Activated CD4-positive, alpha-beta T cell treated with anti-CD3 and anti-CD28 coated beads for 36 hours (primary cell): ENCODE measurements at regions of chr2 and their contacts with region 1.

Region 1: GRCh38 chr2:239401067-239401880 is 454 bp upstream of the HDAC4 start:
- DNase-seq: peak; percentile 99
- ATAC-seq: peak; percentile 93
- H3K4me3 Mint-ChIP-seq: peak overlapping the region; percentile 88
- H3K27ac Mint-ChIP-seq: peak overlapping the region; percentile 97
- H3K4me1 Mint-ChIP-seq: peaks cover 41% of the 10 kb centered on the region
- H3K27me3 Mint-ChIP-seq: peaks cover 2% of the 10 kb centered on the region

Region 2: GRCh38 chr2:238081150-238081549 is 1320.1 kb before region 1 on chr2:
- CTCF ChIA-PET with region 1: no interaction called
- POLR2A ChIA-PET with region 1: no interaction called
- intact Hi-C with region 1: no loop called
- DNase-seq: no peak
- ATAC-seq: no peak
- H3K4me3 Mint-ChIP-seq: no peak overlapping the region
- H3K27ac Mint-ChIP-seq: no peak overlapping the region
- H3K4me1 Mint-ChIP-seq: no peaks in the 10 kb centered on the region
- H3K27me3 Mint-ChIP-seq: no peaks in the 10 kb centered on the region

Region 3: DNA sequence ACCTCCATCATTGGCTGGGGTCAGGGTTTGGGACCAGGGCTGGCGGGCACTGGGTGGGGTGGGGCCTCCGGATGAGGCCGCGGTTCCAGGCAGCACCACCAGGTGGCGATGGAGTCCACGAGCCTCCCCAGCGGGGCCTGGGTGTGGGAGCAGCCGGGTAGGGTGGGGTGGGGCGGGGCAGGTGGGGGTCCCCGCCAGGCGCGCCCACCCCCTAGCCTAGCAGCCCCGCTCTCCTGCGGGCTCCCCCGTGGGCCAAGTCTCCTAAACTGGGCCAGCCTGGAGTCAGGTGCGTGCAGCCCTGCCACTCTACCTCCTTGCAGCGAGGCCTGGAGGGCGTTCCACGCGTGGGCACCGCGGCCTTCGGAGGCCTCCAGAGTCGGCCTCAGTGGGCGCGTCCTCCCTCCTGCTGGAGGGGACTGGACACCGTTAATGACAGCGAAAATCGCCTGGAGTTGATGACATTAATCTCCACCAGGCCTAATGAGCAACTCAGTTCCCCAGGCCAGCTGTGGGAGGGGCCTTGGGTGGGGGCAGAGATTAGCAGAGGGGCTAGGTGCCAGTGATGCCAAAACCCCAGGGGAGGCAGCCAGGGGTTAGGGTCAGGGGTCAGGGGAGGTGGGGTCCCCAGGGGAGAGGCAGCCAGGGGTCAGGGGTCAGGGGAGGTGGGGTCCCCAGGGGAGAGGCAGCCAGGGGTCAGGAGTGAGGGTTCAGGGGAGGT is 365.8 kb before region 1 on chr2:
- CTCF ChIA-PET with region 1: no interaction called
- POLR2A ChIA-PET with region 1: no interaction called
- intact Hi-C with region 1: loop called (anchors 1 to 10 kb)
- DNase-seq: peak; percentile 81
- ATAC-seq: peak; percentile 95
- H3K4me3 Mint-ChIP-seq: no peak overlapping the region
- H3K27ac Mint-ChIP-seq: no peak overlapping the region
- H3K4me1 Mint-ChIP-seq: no peaks in the 10 kb centered on the region
- H3K27me3 Mint-ChIP-seq: peaks cover 9% of the 10 kb centered on the region

Region 4: GRCh38 chr2:239125726-239126675 is 275.3 kb before region 1 on chr2:
- CTCF ChIA-PET with region 1: no interaction called
- POLR2A ChIA-PET with region 1: no interaction called
- intact Hi-C with region 1: no loop called
- DNase-seq: no peak
- ATAC-seq: no peak
- H3K4me3 Mint-ChIP-seq: no peak overlapping the region
- H3K27ac Mint-ChIP-seq: no peak overlapping the region
- H3K4me1 Mint-ChIP-seq: no peaks in the 10 kb centered on the region
- H3K27me3 Mint-ChIP-seq: no peaks in the 10 kb centered on the region

Region 5: GRCh38 chr2:239239607-239240413 is 161.5 kb before region 1 on chr2:
- CTCF ChIA-PET with region 1: no interaction called
- POLR2A ChIA-PET with region 1: no interaction called
- intact Hi-C with region 1: no loop called
- DNase-seq: no peak
- ATAC-seq: no peak
- H3K4me3 Mint-ChIP-seq: no peak overlapping the region
- H3K27ac Mint-ChIP-seq: no peak overlapping the region
- H3K4me1 Mint-ChIP-seq: peaks cover 37% of the 10 kb centered on the region
- H3K27me3 Mint-ChIP-seq: no peaks in the 10 kb centered on the region

Region 6: DNA sequence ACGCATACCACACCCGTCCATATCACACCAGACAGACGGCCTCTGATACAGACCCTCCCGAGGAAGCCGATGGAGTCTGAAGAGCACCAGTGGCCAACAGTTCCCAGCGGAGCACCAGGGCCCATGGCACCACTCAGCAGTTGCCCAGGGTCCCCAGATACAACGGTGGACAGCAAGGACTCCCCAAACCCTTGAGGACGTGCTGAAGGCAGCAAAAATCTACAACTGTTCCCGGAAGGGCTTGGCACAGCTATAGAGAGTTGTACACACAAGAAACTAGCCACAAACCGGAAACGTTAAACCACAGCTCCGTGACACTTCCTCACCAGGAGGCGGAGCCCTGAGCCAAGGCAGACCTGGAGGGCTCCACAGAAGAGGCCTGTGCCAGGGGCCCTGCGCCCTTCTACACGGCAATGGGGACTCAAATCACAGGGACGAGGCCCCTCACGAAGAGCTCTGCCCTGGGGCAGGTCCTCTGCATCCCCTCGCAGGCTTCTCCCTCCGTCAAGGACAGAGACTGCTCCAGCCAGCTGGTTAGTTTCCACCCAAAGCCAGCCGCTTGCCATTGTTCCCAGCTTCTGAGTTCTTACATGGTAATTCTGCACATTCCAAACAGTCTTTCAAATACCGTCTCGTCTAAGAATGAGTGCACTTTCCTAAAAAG is 133.9 kb before region 1 on chr2:
- CTCF ChIA-PET with region 1: no interaction called
- POLR2A ChIA-PET with region 1: interaction called, 5 read pairs
- intact Hi-C with region 1: loop called (anchors 1 to 2 kb)
- DNase-seq: peak; percentile 95
- ATAC-seq: peak; percentile 75
- H3K4me3 Mint-ChIP-seq: peak overlapping the region; percentile 80
- H3K27ac Mint-ChIP-seq: peak overlapping the region; percentile 96
- H3K4me1 Mint-ChIP-seq: peaks cover 77% of the 10 kb centered on the region
- H3K27me3 Mint-ChIP-seq: peaks cover 18% of the 10 kb centered on the region

Region 7: GRCh38 chr2:239321596-239322415 is 79.5 kb before region 1 on chr2:
- CTCF ChIA-PET with region 1: interaction called, 4 read pairs
- POLR2A ChIA-PET with region 1: no interaction called
- intact Hi-C with region 1: loop called in 1 of 2 experiments (anchors 1 kb)
- DNase-seq: peak; percentile 87
- ATAC-seq: peak; percentile 94
- H3K4me3 Mint-ChIP-seq: peak overlapping the region; percentile 39
- H3K27ac Mint-ChIP-seq: peak overlapping the region; percentile 91
- H3K4me1 Mint-ChIP-seq: peaks cover 80% of the 10 kb centered on the region
- H3K27me3 Mint-ChIP-seq: peaks cover 5% of the 10 kb centered on the region

Region 8: GRCh38 chr2:239390546-239391285 is 10.6 kb before region 1 on chr2:
- CTCF ChIA-PET with region 1: no interaction called
- POLR2A ChIA-PET with region 1: no interaction called
- intact Hi-C with region 1: no loop called
- DNase-seq: no peak
- ATAC-seq: no peak
- H3K4me3 Mint-ChIP-seq: no peak overlapping the region
- H3K27ac Mint-ChIP-seq: no peak overlapping the region
- H3K4me1 Mint-ChIP-seq: peaks cover 6% of the 10 kb centered on the region
- H3K27me3 Mint-ChIP-seq: no peaks in the 10 kb centered on the region

Region 9: DNA sequence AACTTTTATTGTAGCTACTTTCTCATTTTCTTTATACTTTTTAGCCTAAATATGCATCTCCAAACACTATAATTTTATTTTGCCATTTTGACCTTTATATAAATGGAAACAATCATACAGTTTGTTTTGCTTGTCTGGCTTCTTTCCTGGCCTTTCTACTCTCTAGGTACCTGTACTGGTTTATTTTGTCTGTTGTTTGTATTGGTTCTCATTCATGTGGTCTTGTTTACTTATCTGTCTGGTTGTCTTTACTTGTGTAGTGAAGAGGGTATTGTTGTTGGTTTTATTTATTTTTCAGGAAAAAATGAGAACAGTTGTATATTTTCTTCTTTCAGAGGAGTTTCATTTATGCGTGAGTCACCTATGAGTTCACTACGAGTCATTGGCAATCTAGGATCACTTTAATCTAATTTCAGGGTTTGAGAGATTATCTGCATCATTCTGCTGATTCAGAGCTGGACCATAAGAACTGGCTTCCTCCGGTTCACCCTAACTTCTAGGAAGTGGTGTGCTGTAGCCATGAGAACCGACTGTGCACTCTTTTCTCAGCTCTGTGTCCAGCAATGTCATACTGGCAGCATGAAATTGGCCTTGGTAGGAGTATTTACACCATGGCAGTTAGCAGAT is 32.6 kb after region 1 on chr2:
- CTCF ChIA-PET with region 1: no interaction called
- POLR2A ChIA-PET with region 1: no interaction called
- intact Hi-C with region 1: loop called in 1 of 2 experiments (anchors 1 kb)
- DNase-seq: peak; percentile 52
- ATAC-seq: peak; percentile 100
- H3K4me3 Mint-ChIP-seq: no peak overlapping the region
- H3K27ac Mint-ChIP-seq: peak overlapping the region; percentile 26
- H3K4me1 Mint-ChIP-seq: peaks cover 11% of the 10 kb centered on the region
- H3K27me3 Mint-ChIP-seq: peaks cover 2% of the 10 kb centered on the region

Region 10: GRCh38 chr2:240021488-240022104 is 620.3 kb after region 1 on chr2:
- CTCF ChIA-PET with region 1: no interaction called
- POLR2A ChIA-PET with region 1: interaction called, 3 read pairs
- intact Hi-C with region 1: loop called in 1 of 2 experiments (anchors 1 kb)
- DNase-seq: peak; percentile 83
- ATAC-seq: peak; percentile 28
- H3K4me3 Mint-ChIP-seq: no peak overlapping the region
- H3K27ac Mint-ChIP-seq: no peak overlapping the region
- H3K4me1 Mint-ChIP-seq: peaks cover 25% of the 10 kb centered on the region
- H3K27me3 Mint-ChIP-seq: no peaks in the 10 kb centered on the region

Region 11: DNA sequence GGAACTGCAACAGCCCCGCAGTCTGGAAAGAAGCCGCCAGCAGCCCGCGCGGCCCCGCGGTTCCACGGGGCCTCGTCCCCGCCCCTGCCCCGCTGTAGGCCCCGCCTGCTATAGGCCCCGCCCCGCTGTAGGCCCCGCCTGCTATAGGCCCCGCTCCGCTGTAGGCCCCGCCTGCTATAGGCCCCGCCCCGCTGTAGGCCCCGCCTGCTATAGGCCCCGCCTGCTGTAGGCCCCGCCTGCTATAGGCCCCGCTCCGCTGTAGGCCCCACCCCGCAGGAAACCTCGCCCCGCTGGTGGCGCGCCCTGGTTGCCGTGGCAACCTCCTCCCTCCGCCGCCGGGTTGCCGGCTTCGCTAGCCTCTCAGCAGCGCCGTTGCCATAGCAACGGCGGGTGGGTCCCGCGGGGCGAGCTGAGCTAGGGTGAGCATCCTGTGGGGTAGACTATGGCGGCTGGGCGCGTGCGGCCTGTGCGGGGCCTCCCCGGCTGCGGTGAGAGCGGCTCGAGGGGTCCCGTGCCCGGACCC is 1431.0 kb after region 1 on chr2:
- CTCF ChIA-PET with region 1: no interaction called
- POLR2A ChIA-PET with region 1: no interaction called
- intact Hi-C with region 1: loop called in 1 of 2 experiments (anchors 1 kb)
- DNase-seq: peak; percentile 98
- ATAC-seq: peak; percentile 96
- H3K4me3 Mint-ChIP-seq: peak overlapping the region; percentile 63
- H3K27ac Mint-ChIP-seq: no peak overlapping the region
- H3K4me1 Mint-ChIP-seq: peaks cover 2% of the 10 kb centered on the region
- H3K27me3 Mint-ChIP-seq: peaks cover 19% of the 10 kb centered on the region